ENCODE measurements at regions of chr14 and their contacts with region 1.

Region 1: DNA sequence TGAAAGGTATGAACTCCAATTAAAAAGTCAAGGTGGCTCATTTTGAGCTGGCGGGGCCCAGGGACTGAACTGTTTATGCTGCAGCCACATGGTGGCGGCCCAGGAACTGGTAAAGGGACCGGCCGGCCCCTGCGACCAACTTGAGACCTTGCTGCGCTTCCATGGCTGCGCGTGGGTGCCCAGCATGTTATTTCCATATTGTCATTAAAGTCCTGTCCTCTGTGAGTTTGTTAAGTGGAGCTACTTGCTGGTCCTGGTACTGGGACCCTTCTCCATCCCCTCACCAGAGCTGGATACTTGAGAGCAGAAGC is 62.3 kb downstream of the BEGAIN start:
- DNase-seq: peak; percentile 76
- ATAC-seq: peak; percentile 82
- H3K4me3 Mint-ChIP-seq: no peak overlapping the region
- H3K27ac Mint-ChIP-seq: no peak overlapping the region
- H3K4me1 Mint-ChIP-seq: peaks cover 2% of the 10 kb centered on the region; the same call in 1 of the 2 replicates
- H3K27me3 Mint-ChIP-seq: no peaks in the 10 kb centered on the region
- CTCF ChIP-seq: peak; percentile 60; the same call in 1 of the 2 replicates

Region 2: DNA sequence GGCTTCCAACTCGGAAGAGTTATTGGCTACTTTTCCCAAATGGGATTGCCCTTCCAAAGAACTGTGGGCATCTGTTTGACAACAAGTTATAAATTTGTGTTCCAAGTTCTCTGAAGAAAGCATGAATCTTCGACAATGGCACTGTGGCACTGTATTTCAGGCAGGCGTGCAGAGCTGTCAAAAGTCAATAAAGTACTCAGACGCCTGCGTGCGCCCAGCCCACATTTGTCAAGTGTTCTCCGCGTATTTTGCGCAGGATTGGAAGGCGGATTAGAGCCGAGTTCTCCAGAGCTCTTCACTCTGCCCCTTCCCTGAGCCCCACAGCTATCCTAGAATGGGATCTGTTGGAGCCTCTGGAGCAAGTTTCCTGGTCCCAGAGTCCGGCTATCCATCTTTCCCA is 98.6 kb before region 1 on chr14:
- CTCF ChIA-PET with region 1: no interaction called
- POLR2A ChIA-PET with region 1: no interaction called
- DNase-seq: no peak
- ATAC-seq: no peak
- H3K4me3 Mint-ChIP-seq: no peak overlapping the region
- H3K27ac Mint-ChIP-seq: no peak overlapping the region
- H3K4me1 Mint-ChIP-seq: peaks cover 17% of the 10 kb centered on the region
- H3K27me3 Mint-ChIP-seq: no peaks in the 10 kb centered on the region
- CTCF ChIP-seq: no peak

Region 3: DNA sequence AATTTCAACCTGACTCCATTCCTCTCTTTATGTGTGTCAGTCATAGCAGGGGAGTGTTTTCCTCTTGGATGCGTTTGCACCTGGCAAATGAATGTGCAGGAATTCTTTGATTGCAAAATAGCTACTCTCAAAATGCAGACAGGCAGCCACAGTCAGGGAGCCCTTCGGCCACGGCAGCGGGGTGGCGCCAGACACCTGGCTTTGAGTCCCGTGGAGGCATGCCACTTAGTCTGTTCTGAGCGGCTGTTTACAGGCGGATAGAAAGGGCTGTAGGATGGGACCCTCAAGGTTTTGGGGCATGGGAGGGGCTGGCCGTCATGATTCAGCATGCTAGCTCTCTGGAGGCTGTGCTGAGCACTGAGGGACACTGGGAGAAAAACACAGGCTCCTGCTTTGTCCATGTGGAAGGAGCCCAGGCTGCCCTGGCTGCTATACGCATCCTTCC is 84.7 kb before region 1 on chr14:
- CTCF ChIA-PET with region 1: interaction called, 22 read pairs
- POLR2A ChIA-PET with region 1: no interaction called
- DNase-seq: peak; percentile 72
- ATAC-seq: peak; percentile 83
- H3K4me3 Mint-ChIP-seq: no peak overlapping the region
- H3K27ac Mint-ChIP-seq: 0 out of 2 replicates have a peak overlapping the region, but pooled peaks have one; percentile 43
- H3K4me1 Mint-ChIP-seq: peaks cover 33% of the 10 kb centered on the region
- H3K27me3 Mint-ChIP-seq: no peaks in the 10 kb centered on the region
- CTCF ChIP-seq: no peak

Region 4: GRCh38 chr14:100503251-100503650 is 21.6 kb before region 1 on chr14:
- CTCF ChIA-PET with region 1: interaction called, 11 read pairs
- POLR2A ChIA-PET with region 1: no interaction called
- DNase-seq: no peak
- ATAC-seq: no peak
- H3K4me3 Mint-ChIP-seq: no peak overlapping the region
- H3K27ac Mint-ChIP-seq: no peak overlapping the region
- H3K4me1 Mint-ChIP-seq: peaks cover 3% of the 10 kb centered on the region; the same call in 1 of the 2 replicates
- H3K27me3 Mint-ChIP-seq: no peaks in the 10 kb centered on the region
- CTCF ChIP-seq: no peak

Region 5: GRCh38 chr14:100557658-100558057 is 32.8 kb after region 1 on chr14:
- CTCF ChIA-PET with region 1: interaction called, 17 read pairs
- POLR2A ChIA-PET with region 1: no interaction called
- DNase-seq: no peak
- ATAC-seq: no peak
- H3K4me3 Mint-ChIP-seq: no peak overlapping the region
- H3K27ac Mint-ChIP-seq: no peak overlapping the region
- H3K4me1 Mint-ChIP-seq: peaks cover 14% of the 10 kb centered on the region
- H3K27me3 Mint-ChIP-seq: peaks cover 5% of the 10 kb centered on the region
- CTCF ChIP-seq: no peak